ENCODE measurements at regions of chr4 and their contacts with region 1.

Region 1: DNA sequence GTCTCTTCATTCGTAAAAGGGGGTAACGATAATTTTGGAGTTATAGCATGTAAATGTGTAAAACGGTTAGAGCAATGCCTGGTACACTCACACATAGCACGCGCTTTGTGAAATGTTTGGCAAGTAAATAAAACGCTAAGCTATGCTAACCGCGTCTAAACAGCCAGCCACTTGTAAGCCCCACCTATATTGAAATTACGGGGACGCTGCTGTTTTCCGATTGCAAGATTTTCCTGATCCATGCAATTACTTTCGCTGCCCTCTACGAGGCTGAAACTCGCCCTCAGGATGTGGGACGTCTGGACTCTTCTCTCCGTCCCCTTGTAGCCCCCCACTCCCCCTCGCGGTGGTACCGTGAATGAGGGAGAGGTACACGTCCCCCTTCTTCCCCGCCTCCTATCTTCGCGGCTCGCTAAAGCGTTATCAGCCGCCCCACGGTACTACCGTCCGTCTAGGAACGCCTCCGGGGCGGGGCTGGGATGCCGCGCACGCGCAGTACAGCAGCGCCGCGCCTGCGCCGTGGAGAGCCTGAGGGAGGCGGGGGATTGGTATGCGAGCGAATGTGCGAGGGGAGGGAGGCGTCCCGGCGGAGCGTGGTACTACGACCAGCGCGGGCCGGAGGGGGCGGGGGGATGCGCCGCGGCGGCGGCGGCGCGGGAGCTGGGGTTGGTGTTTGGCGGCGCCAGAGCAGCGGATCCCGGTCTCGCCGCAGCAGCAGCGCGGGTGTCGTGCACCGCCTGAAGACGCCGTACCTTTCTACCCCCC is at the start of gene STIM2:
- DNase-seq: peak; percentile 100
- H3K4me3 Mint-ChIP-seq: peak within 1 kb of the TSS; percentile 91
- H3K27ac Mint-ChIP-seq: peak within 1 kb of the TSS; percentile 97
- H3K4me1 Mint-ChIP-seq: peaks cover 70% of the 10 kb centered on the region
- H3K27me3 Mint-ChIP-seq: no peaks in the 10 kb centered on the region
- total RNA-seq, gene STIM2: 54.1 and 55.6 TPM in 2 replicates

Region 2: DNA sequence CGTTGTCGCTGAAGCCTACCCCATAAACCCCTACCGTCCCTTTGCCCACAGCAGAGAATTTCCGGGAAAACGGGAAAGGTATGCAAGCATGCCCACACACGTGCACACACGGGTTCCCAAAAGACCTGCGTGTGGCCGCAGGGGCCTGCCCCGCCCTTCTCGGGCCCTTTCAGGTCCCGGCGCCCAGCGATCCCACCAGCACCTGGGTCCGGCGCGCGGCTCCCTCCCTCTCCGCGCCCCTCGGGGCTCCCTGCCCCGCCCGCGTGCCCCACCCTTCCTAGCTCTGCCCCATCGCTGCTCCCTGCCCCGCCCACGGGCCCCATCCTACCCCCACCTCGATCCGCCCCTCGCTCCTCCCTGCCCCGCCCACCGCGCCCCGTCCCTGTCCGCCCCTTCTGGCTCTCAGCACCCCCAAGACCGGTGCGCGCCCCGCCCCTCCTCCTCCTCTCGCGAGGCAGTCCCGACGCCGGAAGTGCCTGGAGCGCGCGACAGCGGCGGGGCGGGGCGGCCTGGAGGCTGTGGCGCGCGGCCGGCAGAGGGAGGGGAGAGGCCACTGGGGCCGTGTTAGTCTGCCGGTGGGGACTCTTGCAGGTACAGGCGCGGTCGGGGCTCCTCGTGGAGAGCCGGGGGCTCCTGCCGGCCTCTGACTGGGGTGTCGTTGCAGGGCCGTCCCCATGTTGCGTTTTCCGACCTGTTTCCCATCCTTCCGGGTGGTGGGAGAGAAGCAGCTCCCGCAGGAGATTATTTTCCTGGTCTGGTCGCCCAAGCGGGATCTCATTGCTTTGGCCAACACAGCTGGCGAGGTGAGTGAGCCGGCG is 1483.4 kb before region 1 on chr4 and contains the start of gene ANAPC4:
- intact Hi-C with region 1: loop called (anchors 2 kb)
- DNase-seq: peak; percentile 95
- H3K4me3 Mint-ChIP-seq: no peak within 1 kb of the TSS
- H3K27ac Mint-ChIP-seq: peak within 1 kb of the TSS; percentile 91
- H3K4me1 Mint-ChIP-seq: no peaks in the 10 kb centered on the region
- H3K27me3 Mint-ChIP-seq: no peaks in the 10 kb centered on the region
- total RNA-seq, gene ANAPC4: 36.0 and 39.9 TPM in 2 replicates

Region 3: GRCh38 chr4:25567253-25567652 is 1293.1 kb before region 1 on chr4:
- intact Hi-C with region 1: no loop called
- DNase-seq: no peak
- H3K4me3 Mint-ChIP-seq: no peak overlapping the region
- H3K27ac Mint-ChIP-seq: no peak overlapping the region
- H3K4me1 Mint-ChIP-seq: no peaks in the 10 kb centered on the region
- H3K27me3 Mint-ChIP-seq: peaks cover 2% of the 10 kb centered on the region

Region 4: DNA sequence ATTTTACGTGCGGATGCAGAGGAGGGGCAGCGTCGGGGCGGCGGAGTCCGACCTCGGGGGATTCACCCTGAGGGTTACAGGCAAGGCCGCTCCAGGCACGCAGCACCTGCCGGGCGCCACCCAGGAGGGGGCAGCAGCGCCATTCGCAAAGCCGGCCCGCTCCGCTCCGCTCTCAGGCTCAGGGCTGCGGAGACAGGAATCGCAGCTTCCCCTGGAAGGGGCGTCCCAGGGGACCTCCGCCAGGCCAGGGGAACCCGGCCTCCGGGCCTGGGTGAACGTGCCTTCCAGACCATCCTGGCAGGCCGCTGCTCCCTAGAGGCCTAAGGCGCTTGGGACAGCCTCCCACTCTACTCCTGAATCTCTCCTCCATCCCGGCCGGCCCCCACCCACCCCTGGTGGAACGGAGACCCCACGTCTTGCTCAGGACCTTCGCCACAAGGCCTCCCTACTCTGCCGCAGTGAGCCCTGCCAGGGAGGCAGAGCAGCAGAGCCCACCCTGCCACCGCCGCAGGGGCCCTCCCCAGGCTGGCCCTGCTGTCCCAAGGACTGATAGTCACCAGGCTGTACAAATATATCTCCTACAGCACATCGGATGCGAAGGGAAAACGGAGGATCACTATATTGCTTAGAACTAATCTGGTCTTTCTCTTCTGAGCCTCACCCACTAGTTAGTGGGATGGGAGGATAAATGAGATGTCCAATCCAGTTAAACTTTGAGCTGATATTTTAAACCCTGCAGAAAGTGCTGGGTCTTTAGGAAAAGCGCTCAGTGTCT is 831.4 kb before region 1 on chr4:
- intact Hi-C with region 1: loop called (anchors 5 kb)
- DNase-seq: peak; percentile 60
- H3K4me3 Mint-ChIP-seq: no peak overlapping the region
- H3K27ac Mint-ChIP-seq: peak overlapping the region; percentile 65
- H3K4me1 Mint-ChIP-seq: peaks cover 19% of the 10 kb centered on the region
- H3K27me3 Mint-ChIP-seq: no peaks in the 10 kb centered on the region

Region 5: DNA sequence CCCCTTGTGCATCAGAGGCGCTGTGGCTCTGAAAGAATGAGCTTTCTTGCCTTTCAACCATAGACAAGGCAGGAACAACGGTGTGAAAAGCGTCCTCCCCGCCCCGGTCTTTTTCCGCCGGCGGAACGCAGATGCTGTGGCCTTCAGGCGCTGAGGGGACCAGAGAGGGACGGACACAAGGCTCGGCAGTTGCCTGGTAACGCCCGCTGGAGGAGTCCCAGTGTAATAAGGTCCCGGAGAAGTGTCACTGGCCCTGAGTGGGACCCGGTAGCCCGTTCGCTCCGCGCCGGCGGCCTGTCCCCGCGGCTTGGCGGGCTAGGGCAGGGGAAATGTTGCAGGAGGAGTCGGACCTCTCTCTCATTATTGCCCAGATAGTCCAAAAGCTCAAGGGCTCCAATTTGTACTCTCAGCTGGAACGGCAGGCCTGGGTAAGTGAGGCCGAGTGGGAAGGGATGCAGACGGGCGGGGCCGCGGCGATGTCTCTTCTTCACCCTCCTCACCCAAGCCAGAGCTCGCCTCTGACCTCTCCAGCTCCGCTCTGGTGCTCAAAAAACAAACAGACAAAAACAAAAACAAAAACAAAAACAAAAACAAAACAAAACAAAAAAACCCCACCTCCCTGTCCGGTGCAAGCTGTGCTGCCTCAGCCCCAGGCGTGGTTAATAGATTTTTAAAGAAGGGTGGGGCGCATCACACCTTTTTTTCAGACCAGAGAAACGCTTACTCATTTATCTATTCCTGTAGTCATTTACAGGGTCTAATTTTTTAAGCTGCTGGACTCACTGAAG is 276.3 kb before region 1 on chr4 and contains the start of gene TBC1D19:
- intact Hi-C with region 1: loop called (anchors 1 kb)
- DNase-seq: peak; percentile 85
- H3K4me3 Mint-ChIP-seq: peak within 1 kb of the TSS; percentile 93
- H3K27ac Mint-ChIP-seq: peak within 1 kb of the TSS; percentile 93
- H3K4me1 Mint-ChIP-seq: peaks cover 37% of the 10 kb centered on the region
- H3K27me3 Mint-ChIP-seq: peaks cover 2% of the 10 kb centered on the region
- total RNA-seq, gene TBC1D19: 4.3 and 4.7 TPM in 2 replicates

Region 6: GRCh38 chr4:26873391-26874026 is 13.2 kb after region 1 on chr4:
- intact Hi-C with region 1: loop called (anchors 1 kb)
- DNase-seq: peak; percentile 62
- H3K4me3 Mint-ChIP-seq: peak overlapping the region; percentile 61
- H3K27ac Mint-ChIP-seq: peak overlapping the region; percentile 86
- H3K4me1 Mint-ChIP-seq: peaks cover 77% of the 10 kb centered on the region
- H3K27me3 Mint-ChIP-seq: no peaks in the 10 kb centered on the region

Region 7: GRCh38 chr4:26992657-26993361 is 132.5 kb after region 1 on chr4:
- intact Hi-C with region 1: loop called (anchors 1 kb)
- DNase-seq: no peak
- H3K4me3 Mint-ChIP-seq: no peak overlapping the region
- H3K27ac Mint-ChIP-seq: no peak overlapping the region
- H3K4me1 Mint-ChIP-seq: peaks cover 24% of the 10 kb centered on the region
- H3K27me3 Mint-ChIP-seq: no peaks in the 10 kb centered on the region